PC-3 (cell line): ENCODE measurements at regions of chr2 and their contacts with region 1.

Region 1: GRCh38 chr2:156435715-156436496 is at the start of gene GPD2:
- DNase-seq: peak; percentile 91
- ATAC-seq: peak; percentile 92
- H3K4me3 ChIP-seq: peak within 1 kb of the TSS; percentile 74
- H3K27ac ChIP-seq: peak within 1 kb of the TSS; percentile 91
- H3K4me1 ChIP-seq: peaks cover 48% of the 10 kb centered on the region
- H3K27me3 ChIP-seq: no peaks in the 10 kb centered on the region
- CTCF ChIP-seq: no peak
- total RNA-seq, gene GPD2: 91.3 and 107 TPM in 2 replicates

Region 2: DNA sequence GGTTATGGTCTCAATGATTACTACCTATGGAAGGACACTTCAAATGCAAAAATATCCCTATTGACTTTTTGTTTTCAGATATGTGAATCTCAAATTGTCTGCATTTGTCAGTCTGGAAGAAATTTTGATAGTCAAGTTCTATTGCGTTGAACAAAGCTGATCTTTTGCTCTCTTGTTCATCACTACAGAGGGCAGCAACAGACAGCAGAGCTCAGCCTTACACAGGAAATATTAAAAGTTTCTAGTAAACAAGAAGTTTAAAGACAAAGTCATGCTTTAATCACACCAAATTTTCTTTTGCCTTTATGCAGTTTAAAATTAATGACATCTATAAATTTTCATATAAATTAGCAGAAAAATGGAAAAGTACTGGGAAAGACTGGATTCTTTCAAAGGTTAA is 720.9 kb before region 1 on chr2:
- CTCF ChIA-PET with region 1: no interaction called
- POLR2A ChIA-PET with region 1: no interaction called
- intact Hi-C with region 1: loop called (anchors 10 kb)
- DNase-seq: no peak
- ATAC-seq: peak; percentile 88
- H3K4me3 ChIP-seq: no peak overlapping the region
- H3K27ac ChIP-seq: no peak overlapping the region
- H3K4me1 ChIP-seq: no peaks in the 10 kb centered on the region
- H3K27me3 ChIP-seq: no peaks in the 10 kb centered on the region
- CTCF ChIP-seq: no peak

Region 3: GRCh38 chr2:156319811-156320485 is 116.0 kb before region 1 on chr2:
- CTCF ChIA-PET with region 1: no interaction called
- POLR2A ChIA-PET with region 1: no interaction called
- intact Hi-C with region 1: no loop called
- DNase-seq: no peak
- ATAC-seq: no peak
- H3K4me3 ChIP-seq: no peak overlapping the region
- H3K27ac ChIP-seq: no peak overlapping the region
- H3K4me1 ChIP-seq: no peaks in the 10 kb centered on the region
- H3K27me3 ChIP-seq: no peaks in the 10 kb centered on the region
- CTCF ChIP-seq: no peak

Region 4: DNA sequence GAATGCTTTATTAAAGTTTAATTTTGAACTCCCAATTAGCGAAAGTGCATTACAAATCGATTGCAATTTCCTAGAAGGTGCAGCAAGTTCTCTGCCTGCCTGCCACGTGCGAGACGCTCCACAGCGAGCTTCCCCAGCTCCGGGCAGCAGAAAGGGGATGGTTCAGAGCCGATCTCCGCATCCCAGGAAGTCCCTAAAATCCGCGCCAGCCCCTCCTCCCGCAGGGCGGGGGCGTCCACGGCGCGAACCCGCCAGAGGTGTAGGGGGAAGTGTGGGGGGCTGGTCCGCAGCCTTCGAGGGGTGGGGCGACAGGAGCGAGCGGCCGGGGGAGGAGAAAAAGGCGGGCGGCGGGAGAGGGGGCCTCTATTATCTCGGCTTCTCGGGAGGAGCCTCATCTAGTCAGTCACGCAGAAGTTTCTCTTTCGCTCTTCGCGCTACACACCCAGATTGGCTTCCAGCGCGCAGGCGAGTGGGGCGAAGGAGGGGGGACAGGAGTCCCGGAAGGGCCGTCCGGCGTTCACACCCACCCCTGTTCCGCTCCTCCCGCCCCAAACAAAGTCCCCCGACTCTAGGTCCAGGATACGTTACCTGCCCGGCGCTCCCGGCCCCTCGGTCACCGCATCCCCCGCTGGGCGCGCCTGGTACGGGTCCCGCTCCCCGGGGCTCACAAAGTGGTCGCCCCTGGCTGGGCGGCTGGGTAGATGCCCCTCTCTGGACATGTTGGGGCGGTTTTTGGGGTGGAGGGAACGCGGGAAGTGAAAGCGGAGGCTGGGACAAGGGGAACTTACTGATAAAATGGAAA is 94.3 kb before region 1 on chr2:
- CTCF ChIA-PET with region 1: no interaction called
- POLR2A ChIA-PET with region 1: interaction called, 11 read pairs
- intact Hi-C with region 1: no loop called
- DNase-seq: peak; percentile 90
- ATAC-seq: peak; percentile 76
- H3K4me3 ChIP-seq: peak overlapping the region; percentile 95
- H3K27ac ChIP-seq: peak overlapping the region; percentile 98
- H3K4me1 ChIP-seq: peaks cover 43% of the 10 kb centered on the region
- H3K27me3 ChIP-seq: no peaks in the 10 kb centered on the region
- CTCF ChIP-seq: no peak

Region 5: DNA sequence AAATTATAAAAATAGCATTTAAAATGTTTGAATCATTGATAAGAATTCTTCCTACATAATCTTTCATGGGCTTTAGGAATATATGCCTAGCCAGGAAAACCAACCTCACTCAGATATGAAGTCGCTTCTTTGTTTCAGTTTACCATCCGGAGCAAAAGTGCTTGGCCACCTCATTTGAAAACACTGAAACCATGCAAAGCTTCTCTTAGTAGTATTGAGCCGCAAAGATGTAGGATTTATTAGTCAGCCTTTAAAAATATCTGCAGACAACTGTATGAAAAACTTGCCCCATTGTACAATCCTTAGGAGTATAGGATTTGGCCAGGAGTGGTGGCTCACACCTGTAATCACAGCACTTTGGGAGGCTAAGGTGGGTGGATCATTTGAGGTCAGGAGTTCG is 24.1 kb before region 1 on chr2:
- CTCF ChIA-PET with region 1: no interaction called
- POLR2A ChIA-PET with region 1: no interaction called
- intact Hi-C with region 1: no loop called
- DNase-seq: no peak
- ATAC-seq: no peak
- H3K4me3 ChIP-seq: no peak overlapping the region
- H3K27ac ChIP-seq: no peak overlapping the region
- H3K4me1 ChIP-seq: no peaks in the 10 kb centered on the region
- H3K27me3 ChIP-seq: no peaks in the 10 kb centered on the region
- CTCF ChIP-seq: no peak

Region 6: DNA sequence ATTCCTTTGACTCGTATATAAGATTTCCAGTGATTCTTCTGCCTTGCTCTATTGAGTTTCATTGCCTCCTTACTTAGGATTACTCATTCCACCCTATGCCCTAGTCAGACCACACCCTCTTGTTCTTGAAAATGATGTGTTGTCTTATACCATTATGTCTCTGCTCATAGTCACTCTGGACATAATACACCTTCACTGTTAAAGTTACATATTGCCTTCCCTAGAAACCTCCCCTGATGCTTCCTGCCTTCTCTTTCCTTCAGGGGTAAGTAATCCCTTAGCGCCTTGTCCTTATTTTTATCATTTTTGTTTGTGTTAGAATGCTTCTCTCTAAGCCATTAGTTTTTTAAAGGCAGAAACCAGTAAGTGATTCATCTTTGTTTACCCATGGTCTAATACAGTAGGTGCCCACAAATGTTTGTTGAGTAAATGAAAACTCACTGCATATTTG is 19.6 kb after region 1 on chr2:
- CTCF ChIA-PET with region 1: no interaction called
- POLR2A ChIA-PET with region 1: interaction called, 5 read pairs
- intact Hi-C with region 1: loop called (anchors 2 kb)
- DNase-seq: peak; percentile 92
- ATAC-seq: peak; percentile 92
- H3K4me3 ChIP-seq: peak overlapping the region; percentile 50; the same call in 1 of the 2 replicates
- H3K27ac ChIP-seq: peak overlapping the region; percentile 98
- H3K4me1 ChIP-seq: peaks cover 45% of the 10 kb centered on the region
- H3K27me3 ChIP-seq: no peaks in the 10 kb centered on the region
- CTCF ChIP-seq: no peak

Region 7: GRCh38 chr2:156490466-156490840 is 54.5 kb after region 1 on chr2:
- CTCF ChIA-PET with region 1: interaction called, 6 read pairs
- POLR2A ChIA-PET with region 1: no interaction called
- intact Hi-C with region 1: loop called (anchors 2 kb)
- DNase-seq: no peak
- ATAC-seq: no peak
- H3K4me3 ChIP-seq: no peak overlapping the region
- H3K27ac ChIP-seq: no peak overlapping the region
- H3K4me1 ChIP-seq: peaks cover 32% of the 10 kb centered on the region
- H3K27me3 ChIP-seq: no peaks in the 10 kb centered on the region
- CTCF ChIP-seq: no peak

Region 8: DNA sequence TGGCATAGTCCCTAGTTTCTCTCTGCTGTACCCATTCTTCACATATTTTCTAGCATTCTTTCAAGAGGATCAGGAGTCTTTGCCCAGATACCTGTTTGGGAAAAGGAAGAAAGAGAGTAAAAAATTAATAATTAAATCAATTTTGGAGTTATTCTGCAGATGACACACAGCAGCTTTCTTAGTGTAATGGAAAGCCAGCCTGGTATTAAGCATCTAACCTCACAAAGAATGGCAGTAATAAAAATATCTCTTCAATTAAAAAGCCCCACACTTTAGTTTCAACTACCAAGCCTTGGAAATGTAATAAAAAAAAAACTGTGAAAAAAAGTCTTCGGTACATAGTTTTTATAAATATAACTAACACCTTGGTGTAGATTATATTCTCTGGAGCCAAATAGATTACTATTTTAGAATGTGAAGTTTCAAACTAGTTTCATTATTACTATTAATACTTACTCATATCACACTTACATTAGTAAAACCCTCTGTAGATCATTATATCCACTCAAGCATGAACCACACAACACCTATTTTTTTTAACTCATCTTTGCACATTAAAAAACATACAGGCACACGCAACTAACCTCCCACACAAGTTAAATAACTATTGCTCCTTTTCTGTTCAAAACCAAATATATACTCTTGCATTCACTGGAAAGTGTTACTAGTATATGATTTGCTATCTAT is 91.2 kb after region 1 on chr2:
- CTCF ChIA-PET with region 1: no interaction called
- POLR2A ChIA-PET with region 1: no interaction called
- intact Hi-C with region 1: no loop called
- DNase-seq: no peak
- ATAC-seq: no peak
- H3K4me3 ChIP-seq: no peak overlapping the region
- H3K27ac ChIP-seq: no peak overlapping the region
- H3K4me1 ChIP-seq: no peaks in the 10 kb centered on the region
- H3K27me3 ChIP-seq: no peaks in the 10 kb centered on the region
- CTCF ChIP-seq: no peak

Region 9: GRCh38 chr2:157603198-157603597 is 1167.3 kb after region 1 on chr2:
- CTCF ChIA-PET with region 1: no interaction called
- POLR2A ChIA-PET with region 1: no interaction called
- intact Hi-C with region 1: no loop called
- DNase-seq: no peak
- ATAC-seq: no peak
- H3K4me3 ChIP-seq: no peak overlapping the region
- H3K27ac ChIP-seq: no peak overlapping the region
- H3K4me1 ChIP-seq: no peaks in the 10 kb centered on the region
- H3K27me3 ChIP-seq: peaks cover 56% of the 10 kb centered on the region
- CTCF ChIP-seq: no peak